Activated CD8-positive, alpha-beta T cell treated with anti-CD3 and anti-CD28 coated beads, Interleukin-2, amount 10 ng/mL, durations not matched to agents 7 days and 5 days (primary cell): ENCODE measurements at regions of chr2 and their contacts with region 1.

Region 1: DNA sequence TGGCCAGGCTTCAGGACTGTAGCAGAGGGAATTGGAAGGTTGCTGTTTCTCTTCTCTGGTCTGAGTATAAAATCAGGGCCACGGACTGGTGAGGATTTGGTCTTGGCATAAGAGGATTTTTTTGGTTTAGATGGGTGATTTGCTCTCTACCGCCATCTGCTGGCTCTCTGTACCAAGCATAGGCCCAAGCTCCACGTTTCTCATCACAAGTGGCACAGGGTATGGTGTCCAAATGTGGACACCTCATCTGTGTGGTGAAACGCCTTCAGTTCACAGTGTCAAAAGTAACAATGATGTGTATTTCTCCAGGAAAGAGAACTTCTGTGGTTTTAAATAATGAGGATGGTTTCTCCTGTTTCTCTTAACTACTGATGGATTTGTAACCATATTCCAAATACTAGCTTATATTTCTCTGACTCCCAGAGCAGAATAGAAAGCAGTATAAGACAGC is 115.1 kb downstream of the EML6 start:
- DNase-seq: peak; percentile 72
- ATAC-seq: peak; percentile 89
- H3K4me3 Mint-ChIP-seq: no peak overlapping the region
- H3K27ac Mint-ChIP-seq: no peak overlapping the region
- H3K4me1 Mint-ChIP-seq: no peaks in the 10 kb centered on the region
- H3K27me3 Mint-ChIP-seq: no peaks in the 10 kb centered on the region

Region 2: DNA sequence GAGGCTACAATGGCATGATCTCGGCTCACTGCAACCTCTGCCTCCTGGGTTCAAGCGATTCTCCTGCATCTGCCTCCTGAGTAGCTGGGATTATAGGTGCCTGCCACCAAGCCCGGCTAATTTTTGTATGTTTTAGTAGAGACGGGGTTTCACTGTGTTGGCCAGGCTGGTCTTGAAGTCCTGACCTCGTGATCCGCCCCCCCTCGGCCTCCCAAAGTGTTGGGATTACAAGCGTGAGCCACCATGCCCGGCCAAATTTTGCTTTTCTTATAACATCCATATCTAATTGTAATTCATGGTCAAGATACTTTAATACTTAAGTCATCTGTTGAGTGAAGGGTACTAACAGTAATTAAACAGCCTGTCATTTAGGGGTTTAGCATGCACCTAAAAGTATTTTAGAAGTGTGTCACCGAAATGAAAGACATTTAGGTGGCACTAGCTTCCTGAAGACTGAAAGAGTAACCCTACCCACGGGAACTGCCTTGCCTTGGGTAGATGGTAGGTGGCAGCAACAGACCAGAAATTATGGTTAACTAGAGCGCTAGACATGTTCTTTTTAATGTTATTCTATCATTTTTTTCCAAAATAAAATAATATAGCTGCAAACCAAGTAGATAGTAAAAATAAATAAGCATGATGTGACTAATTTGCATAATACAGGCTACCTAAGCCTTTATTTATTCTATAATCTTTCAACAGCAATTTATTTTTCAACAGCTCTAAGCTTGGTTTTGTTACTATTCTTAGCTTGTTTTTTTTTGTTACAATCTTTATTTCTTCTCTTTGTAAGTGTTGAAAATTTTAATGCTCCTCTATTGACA is 731.8 kb before region 1 on chr2:
- CTCF ChIA-PET with region 1: interaction called, 12 read pairs
- POLR2A ChIA-PET with region 1: no interaction called
- DNase-seq: peak; percentile 67
- ATAC-seq: peak; percentile 89
- H3K4me3 Mint-ChIP-seq: no peak overlapping the region
- H3K27ac Mint-ChIP-seq: no peak overlapping the region
- H3K4me1 Mint-ChIP-seq: peaks cover 10% of the 10 kb centered on the region
- H3K27me3 Mint-ChIP-seq: peaks cover 6% of the 10 kb centered on the region

Region 3: GRCh38 chr2:54763636-54764291 is 74.8 kb before region 1 on chr2:
- CTCF ChIA-PET with region 1: interaction called, 10 read pairs
- POLR2A ChIA-PET with region 1: no interaction called
- DNase-seq: no peak
- ATAC-seq: no peak
- H3K4me3 Mint-ChIP-seq: no peak overlapping the region
- H3K27ac Mint-ChIP-seq: no peak overlapping the region
- H3K4me1 Mint-ChIP-seq: no peaks in the 10 kb centered on the region
- H3K27me3 Mint-ChIP-seq: no peaks in the 10 kb centered on the region

Region 4: DNA sequence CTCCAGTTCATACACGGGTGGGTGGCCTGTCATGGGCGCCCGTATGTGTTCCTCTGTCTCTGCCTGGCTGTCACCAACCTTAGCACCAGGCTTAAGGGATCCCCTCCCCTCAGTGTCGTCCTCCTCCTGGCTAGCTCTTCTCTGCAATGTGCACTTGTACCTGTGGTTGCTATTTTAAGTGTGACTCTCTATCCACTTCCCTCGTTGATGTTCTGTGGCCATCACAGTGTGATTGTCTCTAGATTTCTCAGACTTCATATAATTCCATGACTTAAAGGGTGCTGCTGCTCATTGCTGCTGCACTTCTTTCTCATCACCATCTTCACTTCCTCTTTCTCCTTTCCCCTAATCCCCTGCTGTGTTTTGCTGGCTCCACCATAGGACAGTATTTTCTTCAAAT is 28.3 kb after region 1 on chr2:
- CTCF ChIA-PET with region 1: interaction called, 11 read pairs
- POLR2A ChIA-PET with region 1: no interaction called
- DNase-seq: no peak
- ATAC-seq: peak; percentile 64
- H3K4me3 Mint-ChIP-seq: no peak overlapping the region
- H3K27ac Mint-ChIP-seq: no peak overlapping the region
- H3K4me1 Mint-ChIP-seq: peaks cover 13% of the 10 kb centered on the region
- H3K27me3 Mint-ChIP-seq: no peaks in the 10 kb centered on the region

Region 5: DNA sequence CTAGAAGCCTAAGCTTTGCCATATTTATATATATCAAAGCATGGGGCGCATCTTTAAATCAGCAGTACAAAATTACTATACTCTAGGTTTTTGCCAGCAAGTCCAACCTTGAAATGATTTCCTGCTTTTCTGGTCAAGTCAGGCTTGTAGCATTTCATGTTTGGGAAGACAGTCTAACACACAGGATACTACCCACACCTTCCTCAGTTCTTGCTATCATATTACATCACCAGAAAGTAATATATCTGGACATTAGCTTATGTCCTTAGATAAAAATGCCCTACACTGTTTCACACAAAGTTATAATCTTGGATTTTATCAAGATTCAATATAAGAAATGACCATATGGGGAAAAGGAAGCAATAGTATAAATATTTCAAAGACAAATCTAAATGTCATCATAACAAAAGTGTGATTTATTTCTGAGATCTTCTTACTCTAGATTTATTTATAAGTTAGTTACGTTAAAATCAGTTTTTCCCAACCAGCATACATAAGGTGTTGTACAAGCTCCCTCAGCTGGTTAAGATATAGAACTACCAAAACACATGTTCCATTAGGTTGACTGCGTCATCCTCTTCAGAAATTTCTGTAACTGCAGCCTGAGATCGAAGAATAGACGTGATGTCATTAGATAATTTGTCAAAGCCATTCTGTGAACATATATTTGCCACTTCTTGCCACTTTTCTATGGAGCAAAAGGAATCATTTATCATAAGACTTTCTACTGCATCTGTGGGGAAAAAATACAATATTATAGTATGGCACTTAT is 336.8 kb after region 1 on chr2:
- CTCF ChIA-PET with region 1: interaction called, 15 read pairs
- POLR2A ChIA-PET with region 1: no interaction called
- DNase-seq: no peak
- ATAC-seq: peak; percentile 77
- H3K4me3 Mint-ChIP-seq: no peak overlapping the region
- H3K27ac Mint-ChIP-seq: no peak overlapping the region
- H3K4me1 Mint-ChIP-seq: no peaks in the 10 kb centered on the region
- H3K27me3 Mint-ChIP-seq: no peaks in the 10 kb centered on the region